ENCODE measurements at regions of chr1 and their contacts with region 1.

Region 1: GRCh38 chr1:10494754-10495474 is 20.2 kb downstream of the PEX14 start:
- DNase-seq: peak; percentile 89
- ATAC-seq: peak; percentile 81
- H3K4me3 Mint-ChIP-seq: peak overlapping the region; percentile 77
- H3K27ac Mint-ChIP-seq: peak overlapping the region; percentile 97
- H3K4me1 Mint-ChIP-seq: peaks cover 54% of the 10 kb centered on the region
- H3K27me3 Mint-ChIP-seq: no peaks in the 10 kb centered on the region

Region 2: GRCh38 chr1:10299151-10299550 is 195.8 kb before region 1 on chr1:
- CTCF ChIA-PET with region 1: no interaction called
- DNase-seq: no peak
- ATAC-seq: no peak
- H3K4me3 Mint-ChIP-seq: no peak overlapping the region
- H3K27ac Mint-ChIP-seq: peak overlapping the region; percentile 48
- H3K4me1 Mint-ChIP-seq: peaks cover 4% of the 10 kb centered on the region
- H3K27me3 Mint-ChIP-seq: no peaks in the 10 kb centered on the region

Region 3: DNA sequence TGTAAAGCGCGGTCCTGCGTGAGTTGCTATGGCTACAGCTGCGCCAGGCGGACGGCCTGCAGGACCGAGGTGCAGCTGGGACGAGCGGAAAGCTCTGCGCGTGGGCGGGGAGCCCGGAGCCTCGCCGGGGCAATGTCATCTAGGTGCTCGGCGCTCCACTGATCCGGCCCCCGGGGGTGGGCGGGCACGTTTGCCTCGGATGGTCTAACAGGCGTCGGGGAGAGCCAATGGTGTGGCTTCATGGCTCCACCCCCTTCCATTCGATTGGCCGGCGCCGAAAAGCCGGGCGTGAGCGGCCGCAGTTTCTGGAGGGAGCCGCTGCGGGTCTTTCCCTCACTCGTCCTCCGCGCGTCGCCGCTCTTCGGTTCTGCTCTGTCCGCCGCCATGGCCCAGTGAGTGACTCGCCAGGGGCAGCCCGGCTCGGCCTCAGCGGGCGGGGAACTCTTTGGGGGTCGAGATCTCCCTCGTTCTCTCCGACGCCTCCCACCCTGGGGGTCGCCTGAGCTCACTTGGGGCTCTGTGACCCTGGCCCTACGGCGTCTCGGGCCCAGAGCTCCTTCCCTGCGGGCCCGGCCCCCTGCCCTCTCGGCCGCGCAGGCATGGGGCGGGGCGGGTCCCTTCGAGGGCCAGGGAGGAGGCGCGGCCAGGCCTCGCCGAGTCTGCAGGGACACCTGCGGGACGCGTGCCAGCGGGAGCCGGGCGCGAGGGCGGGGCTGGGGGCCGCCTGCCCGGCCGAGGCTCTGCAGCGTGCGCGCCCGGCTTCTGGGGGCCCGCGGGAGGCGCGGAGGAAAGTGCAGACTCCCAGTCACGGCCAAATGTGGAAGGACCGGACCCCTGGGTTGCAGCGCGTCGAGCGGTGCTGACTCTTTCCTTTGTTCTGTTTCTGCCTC is 95.9 kb before region 1 on chr1 and contains the start of gene PGD:
- CTCF ChIA-PET with region 1: interaction called, 10 read pairs
- DNase-seq: peak; percentile 99
- ATAC-seq: peak; percentile 98
- H3K4me3 Mint-ChIP-seq: peak within 1 kb of the TSS; percentile 84
- H3K27ac Mint-ChIP-seq: peak within 1 kb of the TSS; percentile 78
- H3K4me1 Mint-ChIP-seq: peaks cover 31% of the 10 kb centered on the region
- H3K27me3 Mint-ChIP-seq: no peaks in the 10 kb centered on the region
- total RNA-seq, gene PGD: 74.9 to 128 TPM

Region 4: GRCh38 chr1:10472220-10473144 is 22.4 kb before region 1 on chr1 and contains the start of gene DFFA:
- CTCF ChIA-PET with region 1: interaction called, 26 read pairs
- DNase-seq: peak; percentile 97
- ATAC-seq: peak; percentile 82
- H3K4me3 Mint-ChIP-seq: peak within 1 kb of the TSS; percentile 97
- H3K27ac Mint-ChIP-seq: peak within 1 kb of the TSS; percentile 92
- H3K4me1 Mint-ChIP-seq: peaks cover 45% of the 10 kb centered on the region
- H3K27me3 Mint-ChIP-seq: no peaks in the 10 kb centered on the region
- total RNA-seq, gene DFFA: 40.9 to 45.1 TPM

Region 5: GRCh38 chr1:10507111-10507879 is 12.4 kb after region 1 on chr1:
- CTCF ChIA-PET with region 1: interaction called, 235 read pairs
- DNase-seq: peak; percentile 77
- ATAC-seq: peak; percentile 44
- H3K4me3 Mint-ChIP-seq: no peak overlapping the region
- H3K27ac Mint-ChIP-seq: peak overlapping the region; percentile 63
- H3K4me1 Mint-ChIP-seq: peaks cover 61% of the 10 kb centered on the region
- H3K27me3 Mint-ChIP-seq: no peaks in the 10 kb centered on the region

Region 6: DNA sequence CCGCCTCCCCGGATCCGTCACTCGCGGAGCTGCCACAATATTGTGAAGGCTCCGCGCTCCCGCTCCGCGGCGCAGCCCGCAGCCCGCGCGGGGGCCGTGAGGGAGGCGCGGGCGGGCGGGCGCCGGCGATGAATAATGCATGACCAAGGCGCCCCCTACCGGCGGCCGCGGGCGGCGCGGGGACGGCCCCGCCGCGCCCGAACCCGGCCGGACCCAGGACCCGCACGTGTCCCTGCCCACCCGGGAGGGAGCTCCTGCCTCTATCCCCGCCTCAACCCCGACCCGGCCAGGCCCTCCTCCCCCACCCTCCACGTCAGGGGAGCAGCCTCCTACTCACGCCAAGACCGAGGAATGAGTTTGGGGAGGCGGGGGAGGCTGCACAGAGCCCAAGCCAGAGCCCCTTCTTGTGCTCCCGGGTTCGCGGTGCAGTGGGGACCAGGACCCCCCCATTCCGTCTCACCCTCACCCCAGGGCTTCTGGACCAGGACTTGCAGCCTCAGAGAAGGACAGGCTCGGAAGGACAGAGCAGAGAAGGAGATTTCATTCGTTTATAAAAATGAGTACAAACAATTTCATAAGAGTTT is 372.3 kb after region 1 on chr1:
- CTCF ChIA-PET with region 1: interaction called, 68 read pairs
- DNase-seq: peak; percentile 58
- ATAC-seq: peak; percentile 85
- H3K4me3 Mint-ChIP-seq: peak overlapping the region; percentile 17
- H3K27ac Mint-ChIP-seq: no peak overlapping the region
- H3K4me1 Mint-ChIP-seq: peaks cover 10% of the 10 kb centered on the region
- H3K27me3 Mint-ChIP-seq: peaks cover 67% of the 10 kb centered on the region